Ascending aorta (tissue), 2 donors: ENCODE measurements at regions of chr15 and their contacts with region 1.

Region 1: DNA sequence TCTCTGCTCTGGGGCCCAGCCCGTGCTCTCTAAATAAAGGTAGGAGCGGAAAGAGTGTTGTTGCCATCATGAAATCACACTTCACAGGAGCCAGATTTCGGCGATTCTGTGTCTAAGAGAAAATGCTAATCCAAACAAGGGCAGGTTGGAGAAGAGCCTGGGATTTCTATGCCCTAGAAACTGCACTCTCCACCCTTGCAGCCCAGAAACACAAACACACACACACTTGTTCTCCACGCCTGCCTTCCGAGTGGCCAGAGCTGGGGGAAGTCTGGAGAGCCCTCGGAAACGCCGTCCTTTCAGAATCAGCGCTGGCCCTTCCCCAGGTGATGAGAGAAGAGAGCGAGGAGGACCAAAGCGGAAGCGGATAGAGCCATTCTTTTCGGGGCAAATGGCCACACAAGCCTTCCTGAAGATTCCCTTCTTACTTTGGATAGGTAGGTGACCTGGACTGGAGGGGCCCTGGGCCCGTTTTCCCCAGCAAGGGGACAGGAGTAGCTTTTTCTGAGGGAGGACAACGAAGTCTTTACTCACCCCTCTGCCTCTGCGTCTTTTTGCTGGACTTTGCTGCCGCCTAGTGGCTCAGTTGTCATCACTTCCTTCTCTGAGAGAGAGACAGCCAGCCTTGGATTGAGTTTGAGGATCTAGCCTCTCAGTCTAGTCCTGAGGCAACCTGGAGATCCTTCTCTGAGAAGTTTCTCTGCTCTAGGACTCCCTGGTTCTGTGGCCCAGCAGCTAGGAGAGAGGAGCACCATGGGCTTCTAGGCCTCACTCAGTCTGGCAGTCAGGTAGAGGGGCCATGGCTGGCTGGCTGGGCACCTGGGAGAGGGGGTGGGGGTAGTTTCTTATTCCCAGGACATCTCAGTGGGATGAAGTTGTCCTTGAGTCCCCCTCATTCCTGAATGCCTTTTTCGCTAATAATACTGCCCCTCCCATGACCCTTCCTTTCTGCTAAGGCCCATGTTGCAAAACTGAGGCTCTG is 37.7 kb downstream of the SENP8 start:
- DNase-seq: peak in 1 of 2 donors; percentile 93
- H3K4me3 ChIP-seq: peak overlapping the region; percentile 54 to 64
- H3K27ac ChIP-seq: peak overlapping the region; percentile 47 to 82
- H3K4me1 ChIP-seq: peaks cover 0 to 6% of the 10 kb centered on the region in 2 donors
- H3K27me3 ChIP-seq: no peaks in the 10 kb centered on the region
- CTCF ChIP-seq: peak; percentile 81 to 88 (median 83)

Region 2: DNA sequence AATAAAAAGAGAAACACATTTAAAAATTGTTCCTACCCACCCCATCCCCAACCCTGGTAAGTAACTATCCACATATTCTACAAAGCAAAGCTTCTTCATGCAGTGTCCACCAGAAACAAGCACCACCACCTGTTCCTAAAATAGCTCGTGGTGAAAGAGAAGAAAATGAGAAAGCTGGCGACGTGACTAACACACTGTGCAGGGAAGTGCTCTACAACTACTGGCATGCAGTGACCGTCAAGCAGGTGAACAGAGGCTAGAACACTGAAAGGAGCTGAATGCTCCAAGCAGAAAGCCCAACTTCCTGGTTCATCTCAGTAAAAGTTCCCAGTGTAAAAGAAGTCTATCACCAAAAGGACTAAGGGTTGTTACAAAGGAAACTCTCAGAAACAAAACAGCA is 264.9 kb before region 1 on chr15:
- intact Hi-C with region 1: loop called (anchors 10 kb)
- DNase-seq: no peak
- H3K4me3 ChIP-seq: no peak overlapping the region
- H3K27ac ChIP-seq: no peak overlapping the region
- H3K4me1 ChIP-seq: no peaks in the 10 kb centered on the region
- H3K27me3 ChIP-seq: no peaks in the 10 kb centered on the region
- CTCF ChIP-seq: no peak

Region 3: GRCh38 chr15:72117486-72118399 is 38.2 kb before region 1 on chr15 and contains the start of gene MYO9A:
- intact Hi-C with region 1: loop called (anchors 1 kb)
- DNase-seq: peak; percentile 84 to 99
- H3K4me3 ChIP-seq: peak within 1 kb of the TSS; percentile 74 to 87
- H3K27ac ChIP-seq: peak within 1 kb of the TSS; percentile 90 to 97
- H3K4me1 ChIP-seq: peaks cover 0 to 10% of the 10 kb centered on the region in 2 donors
- H3K27me3 ChIP-seq: no peaks in the 10 kb centered on the region
- CTCF ChIP-seq: no peak
- total RNA-seq, gene MYO9A: 128 TPM

Region 4: GRCh38 chr15:72176159-72176558 is 20.2 kb after region 1 on chr15:
- intact Hi-C with region 1: no loop called
- DNase-seq: no peak
- H3K4me3 ChIP-seq: no peak overlapping the region
- H3K27ac ChIP-seq: peak overlapping the region in 1 of 2 donors; percentile 30
- H3K4me1 ChIP-seq: peaks cover 9 to 10% of the 10 kb centered on the region in 2 donors
- H3K27me3 ChIP-seq: no peaks in the 10 kb centered on the region
- CTCF ChIP-seq: no peak